ENCODE measurements at regions of chr5 and their contacts with region 1.

Region 1: GRCh38 chr5:39274398-39275085 is 55.2 kb upstream of the FYB1 start:
- DNase-seq: peak; percentile 27
- ATAC-seq: peak; percentile 90
- H3K4me3 ChIP-seq: peak overlapping the region; percentile 49
- H3K27ac ChIP-seq: peak overlapping the region; percentile 76
- H3K4me1 ChIP-seq: 0 out of 2 replicates have a peak, but pooled peaks cover 3% of the 10 kb centered on the region
- H3K27me3 ChIP-seq: no peaks in the 10 kb centered on the region
- CTCF ChIP-seq: no peak
- EP300 ChIP-seq: no peak
- POLR2A ChIP-seq: no peak
- RAD21 ChIP-seq: no peak

Region 2: DNA sequence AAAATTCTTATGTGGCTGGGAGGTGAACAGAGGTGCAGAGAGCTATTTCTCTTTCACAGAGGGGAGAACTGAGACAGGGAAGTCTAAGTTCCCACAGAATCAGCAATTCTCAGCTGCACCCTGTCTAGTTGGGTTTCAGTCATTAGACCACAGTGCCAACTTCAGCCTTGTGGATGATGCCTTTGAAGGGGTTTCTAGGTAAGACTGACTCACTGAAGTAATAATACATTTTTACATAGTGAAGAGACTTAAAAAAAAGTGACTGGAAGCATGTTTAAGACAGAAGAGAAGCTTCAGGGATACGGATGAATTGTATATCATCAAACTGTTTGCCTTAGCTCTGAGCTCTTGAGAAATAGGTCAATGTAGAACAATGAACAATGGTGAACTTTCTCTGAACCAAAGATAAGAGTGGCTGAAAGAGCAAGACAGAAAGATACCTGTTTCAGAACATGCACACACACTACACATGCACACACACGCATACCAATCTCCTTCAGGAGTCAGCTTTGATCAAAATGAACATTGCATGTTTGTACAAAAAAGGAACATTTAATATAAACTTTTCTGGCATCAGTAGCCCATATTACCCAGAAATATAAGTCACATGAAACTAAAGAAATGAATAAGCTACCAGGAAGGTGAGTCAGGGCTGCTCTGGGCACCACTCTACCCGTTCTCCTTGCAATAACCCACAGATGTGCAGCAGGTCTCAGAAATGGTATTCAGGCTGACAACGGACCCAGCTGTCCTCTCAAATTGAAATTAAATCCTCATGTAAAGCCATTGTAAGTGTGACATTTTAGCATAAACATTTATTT is 42.6 kb before region 1 on chr5:
- CTCF ChIA-PET with region 1: interaction called, 4 read pairs
- POLR2A ChIA-PET with region 1: interaction called, 6 read pairs
- RAD21 ChIA-PET with region 1: interaction called, 14 read pairs
- SMC1A ChIA-PET with region 1: interaction called, 32 read pairs
- in situ Hi-C with region 1: no loop called
- intact Hi-C with region 1: no loop called
- DNase-seq: peak; percentile 73
- ATAC-seq: peak; percentile 78
- H3K4me3 ChIP-seq: no peak overlapping the region
- H3K27ac ChIP-seq: no peak overlapping the region
- H3K4me1 ChIP-seq: no peaks in the 10 kb centered on the region
- H3K27me3 ChIP-seq: no peaks in the 10 kb centered on the region
- CTCF ChIP-seq: no peak
- EP300 ChIP-seq: no peak
- POLR2A ChIP-seq: no peak
- RAD21 ChIP-seq: no peak

Region 3: DNA sequence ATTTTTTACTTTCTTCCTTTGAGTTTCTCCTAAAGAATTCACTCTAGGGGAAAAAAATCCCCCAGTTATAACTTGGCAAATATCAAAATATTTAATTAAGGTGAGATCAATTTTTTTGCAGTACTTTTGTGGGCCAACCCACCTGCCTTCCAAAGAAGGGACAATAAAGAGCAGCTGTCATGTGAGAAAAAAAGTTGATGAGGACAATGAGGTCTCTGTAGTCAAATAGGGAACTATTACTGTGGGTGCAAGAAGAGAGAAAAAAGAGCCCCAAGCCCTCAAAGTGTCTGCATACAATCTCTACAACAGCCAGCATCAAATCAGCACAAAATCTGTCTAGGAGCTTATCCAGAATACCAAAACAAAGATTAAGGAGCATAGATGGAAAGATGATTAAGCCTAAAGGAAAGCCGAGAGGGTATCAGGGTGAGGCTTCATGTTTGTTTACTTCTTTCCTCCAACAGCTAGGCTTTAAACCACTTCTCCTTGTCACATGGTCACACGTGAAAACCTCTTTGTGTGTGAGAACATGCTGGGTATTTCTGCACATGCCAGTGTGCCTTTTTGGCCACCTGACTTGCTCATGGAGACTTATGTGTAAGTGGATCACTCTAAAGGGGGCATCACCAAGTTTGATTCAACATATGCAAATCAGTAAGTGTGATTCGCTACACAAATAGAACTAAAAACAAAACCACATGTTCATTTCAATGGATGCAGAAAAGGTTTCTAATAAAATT is 36.0 kb before region 1 on chr5:
- CTCF ChIA-PET with region 1: interaction called, 3 read pairs
- POLR2A ChIA-PET with region 1: no interaction called
- RAD21 ChIA-PET with region 1: interaction called, 14 read pairs
- SMC1A ChIA-PET with region 1: interaction called, 32 read pairs
- in situ Hi-C with region 1: no loop called
- intact Hi-C with region 1: no loop called
- DNase-seq: peak; percentile 17
- ATAC-seq: no peak
- H3K4me3 ChIP-seq: no peak overlapping the region
- H3K27ac ChIP-seq: no peak overlapping the region
- H3K4me1 ChIP-seq: no peaks in the 10 kb centered on the region
- H3K27me3 ChIP-seq: no peaks in the 10 kb centered on the region
- CTCF ChIP-seq: no peak
- EP300 ChIP-seq: no peak
- POLR2A ChIP-seq: no peak
- RAD21 ChIP-seq: no peak

Region 4: DNA sequence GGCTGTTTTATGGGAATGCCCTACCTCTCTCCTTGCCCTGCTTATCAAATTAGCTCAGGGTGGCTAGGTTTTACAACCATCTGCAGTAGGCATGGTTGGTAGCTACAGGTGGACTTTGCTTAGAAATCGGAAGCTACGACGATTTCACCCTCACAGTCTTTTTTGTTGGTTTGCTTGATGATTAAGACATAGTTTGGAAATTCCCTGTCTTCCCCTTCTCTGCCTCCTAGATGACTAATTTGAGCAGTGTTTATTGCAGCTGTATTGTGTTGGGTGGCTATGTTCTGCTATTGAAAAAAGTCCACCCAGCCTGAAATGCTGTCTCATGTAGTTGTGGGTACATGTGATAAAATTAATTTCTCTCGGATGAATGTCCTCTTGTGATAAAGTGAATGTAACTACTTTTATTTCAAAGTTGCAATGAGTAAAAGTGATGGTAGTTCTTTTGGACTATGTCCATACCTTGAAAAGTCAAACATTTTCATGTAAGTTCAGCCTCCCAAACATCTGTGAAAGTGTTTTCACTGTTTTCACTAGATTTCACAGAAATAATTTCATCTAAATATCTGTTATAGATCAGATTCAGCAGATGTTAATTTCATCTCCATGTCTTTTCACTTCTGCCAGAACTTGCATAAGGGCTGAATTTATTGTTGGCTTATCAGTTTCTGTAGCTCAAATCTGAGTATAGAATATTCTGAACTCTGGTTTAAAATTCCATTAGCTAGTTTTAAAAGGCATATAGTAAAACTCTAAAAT is 17.9 kb before region 1 on chr5:
- CTCF ChIA-PET with region 1: interaction called, 6 read pairs
- POLR2A ChIA-PET with region 1: interaction called, 8 read pairs
- RAD21 ChIA-PET with region 1: interaction called, 15 read pairs
- SMC1A ChIA-PET with region 1: interaction called, 31 read pairs
- in situ Hi-C with region 1: no loop called
- intact Hi-C with region 1: no loop called
- DNase-seq: peak; percentile 56
- ATAC-seq: peak; percentile 93
- H3K4me3 ChIP-seq: no peak overlapping the region
- H3K27ac ChIP-seq: peak overlapping the region; percentile 48; the same call in 1 of the 2 replicates
- H3K4me1 ChIP-seq: no peaks in the 10 kb centered on the region
- H3K27me3 ChIP-seq: no peaks in the 10 kb centered on the region
- CTCF ChIP-seq: no peak
- EP300 ChIP-seq: no peak
- POLR2A ChIP-seq: no peak
- RAD21 ChIP-seq: no peak

Region 5: GRCh38 chr5:39264528-39264927 is 10.0 kb before region 1 on chr5:
- CTCF ChIA-PET with region 1: interaction called, 8 read pairs
- POLR2A ChIA-PET with region 1: interaction called, 4 read pairs
- RAD21 ChIA-PET with region 1: interaction called, 10 read pairs
- SMC1A ChIA-PET with region 1: interaction called, 31 read pairs
- in situ Hi-C with region 1: no loop called
- intact Hi-C with region 1: no loop called
- DNase-seq: peak; percentile 69
- ATAC-seq: peak; percentile 96
- H3K4me3 ChIP-seq: no peak overlapping the region
- H3K27ac ChIP-seq: peak overlapping the region; percentile 56
- H3K4me1 ChIP-seq: 0 out of 2 replicates have a peak, but pooled peaks cover 2% of the 10 kb centered on the region
- H3K27me3 ChIP-seq: no peaks in the 10 kb centered on the region
- CTCF ChIP-seq: no peak
- EP300 ChIP-seq: no peak
- POLR2A ChIP-seq: no peak
- RAD21 ChIP-seq: no peak